ENCODE measurements at regions of chr16 and their contacts with region 1.

Region 1: DNA sequence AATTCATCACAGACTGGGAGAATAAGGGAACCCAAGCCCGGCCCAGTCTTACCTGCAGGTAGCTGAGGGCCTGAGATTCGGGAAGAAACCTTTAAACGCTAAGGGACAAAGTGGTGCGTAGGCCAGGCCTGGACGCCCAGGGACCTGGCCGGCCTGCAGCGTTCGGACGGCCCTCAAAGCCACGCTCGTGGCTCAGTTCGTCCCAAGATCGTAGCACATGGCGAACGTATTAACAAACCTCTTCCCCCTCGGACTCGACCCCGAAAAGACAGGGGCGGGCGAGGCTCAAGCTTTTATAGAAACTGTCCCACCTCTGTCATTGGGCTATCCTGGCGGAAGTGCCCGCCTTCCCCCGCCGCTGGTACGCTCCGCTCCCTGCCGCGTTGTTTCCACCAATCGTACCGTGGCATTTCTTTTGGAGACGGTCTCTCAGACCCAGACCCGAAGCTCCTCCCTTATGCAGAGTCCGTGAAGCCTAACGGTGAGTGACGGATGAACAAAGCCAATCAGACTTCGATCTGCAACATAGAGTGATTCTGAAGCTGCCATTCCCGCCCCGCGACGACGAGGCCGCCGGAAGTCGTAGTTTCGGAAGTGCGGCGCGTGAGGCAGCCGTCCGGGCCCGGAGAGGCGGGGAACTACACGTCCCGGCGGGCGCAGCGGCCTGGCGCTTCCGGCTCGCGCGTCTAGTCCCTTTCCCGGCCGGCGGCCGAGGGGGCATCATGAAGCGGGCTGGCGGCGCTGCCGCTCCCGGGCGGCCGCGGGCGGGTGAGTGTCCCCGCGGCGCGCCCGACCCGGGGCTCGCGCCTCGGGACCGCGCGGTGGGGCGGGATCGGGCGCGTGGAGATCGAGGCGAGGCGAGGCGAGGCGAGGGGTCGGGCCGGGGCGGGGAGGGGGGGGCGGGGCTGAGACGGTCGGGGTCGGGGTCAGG is at the start of gene TRAF7:
- DNase-seq: peak; percentile 99 to 100
- ATAC-seq: peak; percentile 70 to 84
- H3K4me3 ChIP-seq: peak within 1 kb of the TSS; percentile 88
- H3K27ac ChIP-seq: peak within 1 kb of the TSS; percentile 94
- H3K4me1 ChIP-seq: peaks cover 62% of the 10 kb centered on the region
- CTCF ChIP-seq: no peak
- EP300 ChIP-seq: no peak
- POLR2A ChIP-seq: peak; percentile 99
- RAD21 ChIP-seq: no peak
- polyA plus RNA-seq, gene TRAF7: 31.9 and 32.0 TPM in 2 replicates

Region 2: GRCh38 chr16:2023098-2023925 is 132.0 kb before region 1 on chr16:
- CTCF ChIA-PET with region 1: interaction called, 23 read pairs
- POLR2A ChIA-PET with region 1: interaction called, 19 read pairs
- DNase-seq: peak; percentile 88 to 92
- ATAC-seq: peak; percentile 54 to 80
- H3K4me3 ChIP-seq: peak overlapping the region; percentile 34
- H3K27ac ChIP-seq: peak overlapping the region; percentile 89 to 97
- H3K4me1 ChIP-seq: peaks cover 31% of the 10 kb centered on the region
- CTCF ChIP-seq: peak; percentile 93
- EP300 ChIP-seq: no peak
- POLR2A ChIP-seq: peak; percentile 61
- RAD21 ChIP-seq: peak; percentile 94 to 97

Region 3: GRCh38 chr16:2102471-2102870 is 52.9 kb before region 1 on chr16:
- CTCF ChIA-PET with region 1: no interaction called
- POLR2A ChIA-PET with region 1: no interaction called
- DNase-seq: no peak
- ATAC-seq: no peak
- H3K4me3 ChIP-seq: no peak overlapping the region
- H3K27ac ChIP-seq: no peak overlapping the region
- H3K4me1 ChIP-seq: no peaks in the 10 kb centered on the region
- CTCF ChIP-seq: no peak
- EP300 ChIP-seq: no peak
- POLR2A ChIP-seq: no peak
- RAD21 ChIP-seq: no peak

Region 4: GRCh38 chr16:2166757-2167638 is 11.6 kb after region 1 on chr16:
- CTCF ChIA-PET with region 1: interaction called, 6 read pairs
- POLR2A ChIA-PET with region 1: interaction called, 21 read pairs
- DNase-seq: no peak
- ATAC-seq: no peak
- H3K4me3 ChIP-seq: no peak overlapping the region
- H3K27ac ChIP-seq: no peak overlapping the region
- H3K4me1 ChIP-seq: no peaks in the 10 kb centered on the region; the same call in 2 of the 3 replicates
- CTCF ChIP-seq: no peak
- EP300 ChIP-seq: no peak
- POLR2A ChIP-seq: no peak
- RAD21 ChIP-seq: no peak

Region 5: GRCh38 chr16:2205104-2205966 is 50.0 kb after region 1 on chr16 and contains the start of gene MLST8:
- CTCF ChIA-PET with region 1: no interaction called
- POLR2A ChIA-PET with region 1: interaction called, 16 read pairs
- DNase-seq: peak; percentile 89 to 90
- ATAC-seq: peak; percentile 60 to 77
- H3K4me3 ChIP-seq: peak within 1 kb of the TSS; percentile 83
- H3K27ac ChIP-seq: peak within 1 kb of the TSS; percentile 97 to 98
- H3K4me1 ChIP-seq: peaks cover 9% of the 10 kb centered on the region; the same call in 2 of the 3 replicates
- CTCF ChIP-seq: no peak
- EP300 ChIP-seq: no peak
- POLR2A ChIP-seq: peak; percentile 65
- RAD21 ChIP-seq: no peak
- polyA plus RNA-seq, gene MLST8: 46.8 and 49.5 TPM in 2 replicates

Region 6: DNA sequence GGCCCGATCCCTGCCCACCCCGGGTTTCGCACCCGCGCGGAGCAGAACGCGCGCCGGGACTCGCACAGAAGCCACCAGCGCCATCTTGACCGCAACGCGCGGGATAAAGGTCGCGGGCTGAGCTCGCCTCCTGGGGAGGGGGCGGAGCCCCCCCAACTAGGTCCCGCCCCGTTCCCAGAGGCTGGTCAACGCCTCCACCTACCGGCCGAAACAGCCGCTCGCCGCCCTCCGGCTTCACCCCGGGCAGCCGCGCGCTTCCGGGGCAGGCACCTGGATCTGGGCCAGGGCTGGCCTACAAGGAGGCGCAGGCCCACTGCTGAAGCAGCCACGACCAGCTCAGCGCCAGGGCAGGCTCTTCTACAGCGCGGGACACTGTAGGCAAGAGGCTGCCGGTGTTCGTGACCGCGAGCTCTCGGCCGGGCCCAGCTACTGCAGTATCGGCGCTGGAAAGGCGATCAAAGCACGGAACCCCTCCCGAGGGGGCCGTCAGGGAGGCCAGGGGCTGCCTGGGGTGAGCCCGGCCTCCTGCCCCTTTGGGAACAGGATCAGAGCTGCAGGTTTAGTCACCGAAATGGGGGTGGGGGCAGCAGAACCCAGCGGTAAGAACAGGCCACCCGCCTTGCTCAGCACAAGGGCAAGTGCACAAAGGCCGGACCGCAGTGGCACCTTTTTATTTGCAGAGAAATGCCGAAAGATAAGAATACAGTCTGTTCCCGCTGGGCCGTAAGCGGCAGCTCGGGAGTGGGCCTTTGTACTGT is 96.3 kb after region 1 on chr16 and contains the start of gene ECI1:
- CTCF ChIA-PET with region 1: interaction called, 3 read pairs
- POLR2A ChIA-PET with region 1: interaction called, 25 read pairs
- DNase-seq: peak; percentile 96 to 98
- ATAC-seq: peak; percentile 83 to 88
- H3K4me3 ChIP-seq: peak within 1 kb of the TSS; percentile 91
- H3K27ac ChIP-seq: peak within 1 kb of the TSS; percentile 96 to 98
- H3K4me1 ChIP-seq: peaks cover 20% of the 10 kb centered on the region
- CTCF ChIP-seq: peak; percentile 56
- EP300 ChIP-seq: no peak
- POLR2A ChIP-seq: peak; percentile 88
- RAD21 ChIP-seq: peak; percentile 43 to 70
- polyA plus RNA-seq, gene ECI1: 41.8 and 47.9 TPM in 2 replicates

Region 7: DNA sequence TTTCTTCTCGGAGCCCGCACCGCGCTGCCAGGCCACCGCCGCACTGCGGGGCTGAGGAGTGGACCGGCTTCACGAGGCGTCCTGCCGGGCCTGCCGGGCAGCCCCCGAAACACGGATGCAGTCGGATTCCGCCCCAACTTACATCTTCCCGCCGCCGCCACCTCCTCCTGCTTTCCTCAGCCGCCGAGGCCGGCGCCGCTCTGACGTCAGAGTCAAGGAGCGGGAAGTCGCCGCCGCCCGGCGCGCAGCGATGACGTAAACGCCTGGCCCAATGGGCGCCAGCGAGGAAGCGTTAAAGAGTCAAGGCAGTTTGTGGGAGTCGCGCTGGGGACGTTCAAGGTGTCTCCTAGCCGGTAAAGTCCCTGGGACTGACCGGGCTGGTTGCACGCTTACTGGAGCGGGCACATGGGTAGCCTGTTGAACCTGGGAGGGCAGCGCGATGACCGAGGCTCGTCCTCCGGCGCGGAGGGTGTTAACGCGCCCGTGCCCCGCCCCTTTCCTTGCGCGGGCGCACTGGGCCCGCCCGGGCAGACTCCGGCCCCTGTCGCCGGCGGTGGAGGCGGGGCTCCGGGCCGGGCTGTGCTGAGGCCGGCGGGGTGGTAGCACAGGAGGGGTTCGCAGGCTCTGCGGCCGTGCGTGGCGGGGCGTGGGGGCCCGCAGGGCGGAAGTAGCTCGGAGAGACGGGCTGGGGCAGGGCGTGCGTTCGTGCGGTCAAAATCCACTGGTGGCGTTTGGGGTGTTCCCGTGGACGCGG is 112.7 kb after region 1 on chr16 and contains the start of gene RNPS1:
- CTCF ChIA-PET with region 1: no interaction called
- POLR2A ChIA-PET with region 1: no interaction called
- DNase-seq: peak; percentile 97 to 98
- ATAC-seq: peak; percentile 85 to 94
- H3K4me3 ChIP-seq: peak within 1 kb of the TSS; percentile 89
- H3K27ac ChIP-seq: peak within 1 kb of the TSS; percentile 98
- H3K4me1 ChIP-seq: peaks cover 23% of the 10 kb centered on the region; the same call in 2 of the 3 replicates
- CTCF ChIP-seq: no peak
- EP300 ChIP-seq: no peak
- POLR2A ChIP-seq: peak; percentile 66
- RAD21 ChIP-seq: no peak
- polyA plus RNA-seq, gene RNPS1: 163 and 183 TPM in 2 replicates

Measured in A549 (cell line).